Activated B cell treated with CpG ODN at 0.5 μM for 24 hours (primary cell): ENCODE measurements at regions of chr2 and their contacts with region 1.

Region 1: DNA sequence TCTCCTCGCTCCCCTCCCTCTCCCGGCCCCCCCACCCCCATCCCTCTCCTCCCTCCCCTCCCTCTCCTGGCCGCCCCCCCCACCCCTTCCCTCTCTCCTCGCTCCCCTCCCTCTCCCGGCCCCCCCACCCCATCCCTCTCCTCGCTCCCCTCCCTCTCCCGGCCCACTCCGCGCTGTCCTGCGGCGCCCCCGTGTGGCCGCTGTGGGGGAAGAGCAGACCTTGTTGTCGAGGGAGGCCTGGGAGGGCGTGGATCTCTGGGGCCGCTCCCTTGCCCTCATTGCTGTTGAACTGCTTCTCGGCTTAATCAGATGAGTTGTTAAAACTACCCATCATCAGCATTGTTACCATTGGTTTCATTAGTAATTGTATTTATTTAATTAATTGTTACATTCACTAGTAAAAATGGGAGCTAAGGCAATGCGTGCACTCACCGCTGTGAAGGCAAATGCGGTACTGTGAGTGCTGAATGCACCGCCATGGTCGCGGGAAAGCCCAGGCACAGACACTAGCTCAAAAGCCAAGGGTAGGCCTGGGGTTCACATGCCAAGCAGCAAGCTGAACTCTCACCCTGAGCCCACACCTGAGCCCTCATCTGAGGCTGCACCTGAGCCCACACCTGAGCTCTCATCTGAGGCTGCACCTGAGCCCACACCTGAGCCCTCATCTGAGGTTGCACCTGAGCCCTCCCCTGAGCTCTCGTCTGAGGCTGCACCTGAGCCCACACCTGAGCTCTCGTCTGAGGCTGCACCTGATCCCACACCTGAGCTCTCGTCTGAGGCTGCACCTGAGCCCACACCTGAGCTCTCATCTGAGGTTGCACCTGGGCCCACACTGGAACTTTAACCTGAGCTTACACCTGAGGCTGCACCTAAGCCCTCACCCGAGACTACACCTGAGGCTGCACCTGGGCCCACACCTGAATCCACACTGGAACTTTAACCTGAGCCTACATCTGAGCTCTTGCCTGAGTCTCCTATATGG is 8.8 kb downstream of the RTP5 start:
- DNase-seq: peak; percentile 73
- ATAC-seq: no peak
- H3K4me3 Mint-ChIP-seq: no peak overlapping the region
- H3K27ac Mint-ChIP-seq: no peak overlapping the region
- H3K4me1 Mint-ChIP-seq: peaks cover 28% of the 10 kb centered on the region
- H3K27me3 Mint-ChIP-seq: no peaks in the 10 kb centered on the region
- CTCF ChIP-seq: no peak

Region 2: GRCh38 chr2:240339996-240340761 is 1538.1 kb before region 1 on chr2:
- CTCF ChIA-PET with region 1: no interaction called
- POLR2A ChIA-PET with region 1: no interaction called
- intact Hi-C with region 1: no loop called
- DNase-seq: no peak
- ATAC-seq: no peak
- H3K4me3 Mint-ChIP-seq: no peak overlapping the region
- H3K27ac Mint-ChIP-seq: no peak overlapping the region
- H3K4me1 Mint-ChIP-seq: no peaks in the 10 kb centered on the region
- H3K27me3 Mint-ChIP-seq: peaks cover 2% of the 10 kb centered on the region
- CTCF ChIP-seq: no peak

Region 3: GRCh38 chr2:240566203-240567136 is 1311.8 kb before region 1 on chr2:
- CTCF ChIA-PET with region 1: no interaction called
- POLR2A ChIA-PET with region 1: no interaction called
- intact Hi-C with region 1: loop called (anchors 5 kb)
- DNase-seq: peak; percentile 85
- ATAC-seq: peak; percentile 65
- H3K4me3 Mint-ChIP-seq: peak overlapping the region; percentile 88
- H3K27ac Mint-ChIP-seq: peak overlapping the region; percentile 96
- H3K4me1 Mint-ChIP-seq: peaks cover 85% of the 10 kb centered on the region
- H3K27me3 Mint-ChIP-seq: no peaks in the 10 kb centered on the region
- CTCF ChIP-seq: peak; percentile 56

Region 4: DNA sequence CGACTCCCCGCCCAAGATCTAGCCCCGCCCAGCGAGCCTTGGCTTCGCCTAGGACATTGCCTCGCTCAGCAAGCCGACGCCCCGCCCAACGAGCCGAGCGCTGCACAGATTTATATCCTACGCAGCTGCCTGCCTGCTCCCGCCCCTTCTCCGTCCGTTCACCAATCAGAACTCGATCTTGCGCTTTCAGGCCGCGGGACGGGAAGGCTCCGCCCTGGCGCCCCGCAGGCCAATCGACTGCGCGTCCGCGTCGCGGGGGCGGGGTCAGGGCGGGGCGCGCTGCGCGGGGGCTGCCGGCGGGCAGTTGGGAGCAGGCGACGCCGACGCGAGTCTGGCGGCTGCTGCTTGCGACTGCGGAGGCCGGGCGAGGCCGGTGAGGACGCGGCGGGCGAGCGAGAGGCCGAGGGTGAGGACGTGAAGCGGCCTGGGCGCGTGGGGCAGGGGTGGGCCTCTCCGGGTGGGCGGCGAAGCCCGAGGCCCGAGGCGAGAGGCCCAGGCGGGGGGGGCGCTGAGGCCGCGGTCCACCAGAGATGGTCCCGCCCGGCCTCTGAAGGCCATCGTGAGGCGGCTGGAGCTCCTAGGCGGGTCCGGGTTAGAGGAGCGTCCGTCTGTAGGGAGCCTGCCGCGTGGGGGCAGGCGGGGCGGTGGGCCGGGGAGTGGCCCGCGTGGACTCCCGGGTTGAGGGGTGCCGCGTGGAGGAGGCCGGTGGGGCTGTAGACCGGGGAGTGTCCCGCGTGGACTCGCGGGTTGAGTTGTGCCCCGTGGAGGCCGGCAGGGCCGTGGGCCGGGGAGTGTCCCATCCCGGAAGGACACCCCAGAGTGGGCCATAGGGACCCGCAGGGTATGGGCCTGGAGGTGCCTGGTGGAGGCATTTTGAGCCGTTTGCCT is 522.1 kb before region 1 on chr2 and contains the start of gene FARP2:
- CTCF ChIA-PET with region 1: no interaction called
- POLR2A ChIA-PET with region 1: interaction called, 3 read pairs
- intact Hi-C with region 1: loop called (anchors 1 kb)
- DNase-seq: peak; percentile 94
- ATAC-seq: peak; percentile 89
- H3K4me3 Mint-ChIP-seq: peak within 1 kb of the TSS; percentile 87
- H3K27ac Mint-ChIP-seq: peak within 1 kb of the TSS; percentile 88
- H3K4me1 Mint-ChIP-seq: peaks cover 49% of the 10 kb centered on the region
- H3K27me3 Mint-ChIP-seq: no peaks in the 10 kb centered on the region
- CTCF ChIP-seq: no peak
- total RNA-seq, gene FARP2: 74.7 and 91.2 TPM in 2 replicates

Region 5: DNA sequence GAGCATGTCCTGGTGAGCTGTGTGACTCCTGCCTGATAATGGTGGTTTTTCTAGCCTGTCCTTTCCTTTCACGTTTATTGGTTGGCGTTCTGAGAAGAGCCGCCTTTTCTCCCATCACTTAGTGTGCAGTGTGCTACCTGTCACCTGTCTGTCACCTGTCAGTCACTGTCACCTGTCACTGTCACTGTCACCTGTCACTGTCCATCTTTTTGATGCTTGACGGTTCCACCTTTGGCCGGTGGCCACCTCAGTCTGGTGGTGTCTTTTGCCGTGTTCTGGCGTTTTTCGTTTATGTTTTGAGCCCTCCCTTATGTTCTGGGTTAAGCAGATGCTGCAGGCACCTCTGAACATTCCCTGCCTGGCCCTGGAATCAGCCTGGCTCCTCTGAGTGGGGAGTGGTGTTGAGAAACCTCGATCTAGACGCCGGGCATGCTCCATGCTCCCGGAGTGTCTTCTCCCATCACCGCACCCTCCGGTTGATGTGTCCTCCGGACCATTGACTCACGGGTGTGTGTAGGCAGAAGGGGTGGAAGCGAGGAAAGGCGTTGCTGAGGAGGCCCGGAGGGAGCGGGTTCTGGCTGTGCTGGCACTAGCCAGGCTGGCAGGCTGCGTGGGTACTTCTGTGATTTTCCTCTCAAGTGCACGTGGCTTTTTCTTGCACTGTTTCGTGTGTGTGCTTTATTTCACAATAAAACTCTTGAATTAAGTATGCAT is 212.4 kb before region 1 on chr2:
- CTCF ChIA-PET with region 1: interaction called, 4 read pairs
- POLR2A ChIA-PET with region 1: no interaction called
- intact Hi-C with region 1: loop called (anchors 1 kb)
- DNase-seq: no peak
- ATAC-seq: no peak
- H3K4me3 Mint-ChIP-seq: no peak overlapping the region
- H3K27ac Mint-ChIP-seq: no peak overlapping the region
- H3K4me1 Mint-ChIP-seq: no peaks in the 10 kb centered on the region
- H3K27me3 Mint-ChIP-seq: no peaks in the 10 kb centered on the region
- CTCF ChIP-seq: no peak

Region 6: DNA sequence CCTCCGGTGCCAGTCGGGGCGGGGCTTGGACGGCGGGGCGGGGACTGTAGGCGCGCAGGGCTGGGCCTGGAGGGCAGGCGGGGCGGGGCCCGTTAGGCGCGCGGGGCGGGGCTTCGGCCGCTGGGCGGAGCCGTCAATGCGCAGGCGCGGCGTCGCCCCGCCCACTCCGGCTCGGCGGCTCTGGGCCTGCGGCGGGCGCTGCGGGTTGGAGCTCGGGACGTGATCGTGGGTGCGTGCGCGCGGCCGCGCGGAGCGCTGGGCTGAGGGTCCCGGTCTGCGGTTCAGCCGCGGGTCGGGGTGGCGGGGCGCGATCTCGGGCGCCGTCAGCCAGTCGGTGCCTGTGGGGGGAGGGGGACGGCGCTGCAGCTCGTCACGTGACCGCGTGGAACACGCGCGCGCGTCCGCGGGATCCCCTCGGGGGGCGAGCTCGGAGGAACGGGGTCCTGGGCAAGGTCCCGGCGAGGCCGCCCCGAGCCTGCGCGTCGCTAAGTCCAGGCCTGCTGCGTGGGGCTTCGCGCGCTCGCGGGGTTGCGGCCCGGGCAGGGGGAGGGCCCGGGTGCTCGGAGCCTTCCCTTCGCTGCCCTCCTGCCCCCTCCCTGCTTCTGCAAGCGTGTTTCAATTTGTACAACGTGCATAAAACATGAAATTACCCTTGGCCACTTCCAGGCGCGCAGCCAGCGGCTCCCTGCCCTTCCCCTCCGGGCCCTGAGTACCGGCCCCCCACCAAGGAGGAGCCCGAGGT is 143.6 kb before region 1 on chr2 and contains the start of gene D2HGDH:
- CTCF ChIA-PET with region 1: interaction called, 3 read pairs
- POLR2A ChIA-PET with region 1: interaction called, 8 read pairs
- intact Hi-C with region 1: loop called (anchors 1 kb)
- DNase-seq: peak; percentile 97
- ATAC-seq: peak; percentile 94
- H3K4me3 Mint-ChIP-seq: peak within 1 kb of the TSS; percentile 82
- H3K27ac Mint-ChIP-seq: peak within 1 kb of the TSS; percentile 75
- H3K4me1 Mint-ChIP-seq: peaks cover 57% of the 10 kb centered on the region
- H3K27me3 Mint-ChIP-seq: no peaks in the 10 kb centered on the region
- CTCF ChIP-seq: no peak
- total RNA-seq, gene D2HGDH: 37.7 and 55.4 TPM in 2 replicates

Region 7: DNA sequence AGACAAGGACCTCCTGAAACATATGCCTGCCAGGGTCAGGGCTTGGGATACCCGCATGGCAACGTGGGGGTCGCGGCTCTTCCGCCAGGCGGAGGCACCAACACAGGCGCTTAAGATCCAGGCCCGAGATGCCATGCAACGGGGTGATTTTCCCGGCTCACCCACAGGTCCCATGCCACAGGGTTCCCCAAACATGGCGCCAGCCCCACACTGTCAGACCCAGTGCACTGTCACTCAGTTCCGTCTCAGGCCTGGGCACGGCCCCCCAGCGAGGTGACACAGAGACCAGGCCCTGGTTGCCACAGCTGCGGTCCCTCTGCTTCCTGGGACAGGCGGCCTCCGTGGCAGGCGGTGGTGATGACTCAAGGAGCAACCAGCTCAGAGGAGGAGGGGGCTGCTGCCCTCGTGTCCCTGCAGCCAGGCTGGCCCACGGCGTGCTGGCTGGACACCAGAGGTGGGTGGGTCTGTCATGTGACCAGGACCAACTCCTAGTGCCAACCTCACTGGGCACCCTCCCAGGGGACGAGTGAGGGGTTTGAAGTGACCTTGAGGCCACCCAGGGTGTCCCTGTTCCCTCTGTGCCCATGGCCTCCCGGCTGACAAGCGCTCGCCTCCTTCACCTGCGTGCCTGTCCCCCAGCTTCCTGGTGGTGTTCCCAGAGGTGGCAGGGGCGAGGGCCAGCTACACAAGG is 24.5 kb before region 1 on chr2:
- CTCF ChIA-PET with region 1: no interaction called
- POLR2A ChIA-PET with region 1: no interaction called
- intact Hi-C with region 1: no loop called
- DNase-seq: no peak
- ATAC-seq: no peak
- H3K4me3 Mint-ChIP-seq: no peak overlapping the region
- H3K27ac Mint-ChIP-seq: no peak overlapping the region
- H3K4me1 Mint-ChIP-seq: peaks cover 7% of the 10 kb centered on the region
- H3K27me3 Mint-ChIP-seq: no peaks in the 10 kb centered on the region
- CTCF ChIP-seq: no peak

Region 8: GRCh38 chr2:242088471-242089212 is 210.4 kb after region 1 on chr2:
- CTCF ChIA-PET with region 1: no interaction called
- POLR2A ChIA-PET with region 1: no interaction called
- intact Hi-C with region 1: loop called (anchors 5 kb)
- DNase-seq: peak; percentile 89
- ATAC-seq: peak; percentile 93
- H3K4me3 Mint-ChIP-seq: peak overlapping the region; percentile 92
- H3K27ac Mint-ChIP-seq: peak overlapping the region; percentile 80
- H3K4me1 Mint-ChIP-seq: peaks cover 54% of the 10 kb centered on the region
- H3K27me3 Mint-ChIP-seq: no peaks in the 10 kb centered on the region
- CTCF ChIP-seq: no peak